ENCODE measurements at regions of chr16 and their contacts with region 1.

Region 1: DNA sequence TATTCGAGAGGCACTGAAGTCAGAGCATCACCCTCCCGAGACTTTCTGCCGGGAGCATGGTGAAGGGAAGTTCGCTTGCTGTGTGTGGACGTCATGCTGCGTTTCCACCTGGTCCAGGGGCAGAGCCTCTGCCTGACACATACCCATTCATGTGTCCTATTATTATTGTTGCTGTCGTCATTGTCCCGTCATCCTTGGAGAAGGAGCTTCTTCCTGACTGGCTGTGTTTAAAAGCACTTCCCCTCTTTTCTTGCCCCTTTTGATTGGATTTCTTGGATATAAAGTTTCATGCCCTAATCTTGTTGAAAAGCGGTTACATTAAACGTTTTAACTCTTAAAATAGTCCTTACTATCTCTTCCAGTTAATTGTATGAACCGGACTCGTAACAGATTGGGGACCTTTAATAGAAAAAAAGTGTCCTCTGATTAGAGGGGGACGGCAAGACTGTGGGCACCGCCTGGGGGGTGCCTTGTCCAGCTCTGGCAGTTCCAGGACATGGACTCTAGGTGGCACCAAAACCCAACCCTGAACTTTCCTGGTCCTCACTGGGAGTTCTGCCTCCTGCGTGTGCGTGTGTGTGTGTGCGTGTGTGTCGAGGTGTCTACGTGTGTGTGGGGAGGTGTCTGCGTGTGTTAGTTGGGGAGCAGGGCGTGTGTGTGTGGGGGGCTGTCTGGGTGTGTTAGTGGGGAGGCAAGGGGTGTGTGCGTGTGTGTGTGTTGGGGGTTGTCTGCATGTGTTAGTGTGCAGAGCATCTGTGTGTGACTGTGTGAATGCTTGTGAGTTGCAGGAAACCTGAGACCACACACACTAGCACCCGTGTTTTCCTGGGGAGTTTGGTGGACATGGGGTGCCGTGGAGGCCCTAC is 133.3 kb upstream of the CIBAR2 start:
- DNase-seq: peak; percentile 53
- H3K4me3 ChIP-seq: no peak overlapping the region
- H3K27ac ChIP-seq: no peak overlapping the region
- H3K4me1 ChIP-seq: no peaks in the 10 kb centered on the region
- H3K27me3 ChIP-seq: no peaks in the 10 kb centered on the region
- CTCF ChIP-seq: peak; percentile 83 to 92
- POLR2A ChIP-seq: no peak

Region 2: DNA sequence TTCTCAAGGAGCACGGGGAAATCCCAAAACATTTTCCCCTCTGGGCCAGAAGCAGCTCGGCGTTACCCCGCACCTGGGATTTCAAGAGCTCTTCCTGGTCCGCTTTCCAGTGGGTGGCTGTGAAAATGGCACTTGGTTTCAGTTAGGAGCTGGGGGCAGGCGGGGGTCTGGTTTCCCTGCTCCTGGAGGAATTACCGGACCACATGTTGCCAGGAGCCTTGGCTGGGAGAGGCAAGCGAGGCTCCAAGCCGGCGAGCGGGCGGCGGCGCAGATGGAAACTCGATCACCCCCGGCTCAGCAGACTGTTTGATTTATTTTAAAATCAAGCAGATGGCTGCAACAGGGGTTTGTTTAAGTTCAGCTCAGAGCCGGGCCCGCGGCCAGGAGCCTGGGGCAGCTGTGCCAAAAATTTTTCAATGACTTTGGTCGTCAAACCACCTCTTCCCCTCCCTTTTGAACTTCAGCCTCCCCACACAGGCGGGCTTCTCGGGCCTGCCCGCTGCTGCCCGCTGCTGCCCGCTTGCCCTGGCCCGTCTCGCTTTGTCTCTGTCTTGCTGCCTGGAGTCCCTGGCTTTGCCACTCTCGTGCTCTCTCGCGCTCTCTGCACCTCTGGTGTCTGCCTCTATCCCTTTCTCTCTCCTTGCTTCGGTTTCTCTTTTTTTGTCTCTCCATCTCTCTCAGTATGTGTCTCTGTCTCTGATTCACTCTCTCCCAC is 25.3 kb before region 1 on chr16:
- CTCF ChIA-PET with region 1: interaction called, 11 read pairs
- POLR2A ChIA-PET with region 1: no interaction called
- dilution Hi-C with region 1: no loop called
- intact Hi-C with region 1: loop called (anchors 1 kb)
- DNase-seq: peak; percentile 79
- H3K4me3 ChIP-seq: peak overlapping the region in 1 of 3 experiments; percentile 18
- H3K27ac ChIP-seq: peak overlapping the region; percentile 24
- H3K4me1 ChIP-seq: peaks cover 10% of the 10 kb centered on the region
- H3K27me3 ChIP-seq: no peaks in the 10 kb centered on the region
- CTCF ChIP-seq: no peak
- POLR2A ChIP-seq: no peak

Region 3: GRCh38 chr16:85234310-85235204 is 11.0 kb before region 1 on chr16:
- CTCF ChIA-PET with region 1: interaction called, 19 read pairs
- POLR2A ChIA-PET with region 1: no interaction called
- dilution Hi-C with region 1: no loop called
- intact Hi-C with region 1: no loop called
- DNase-seq: peak; percentile 69
- H3K4me3 ChIP-seq: peak overlapping the region in 2 of 3 experiments; percentile 49 to 56
- H3K27ac ChIP-seq: peak overlapping the region; percentile 40
- H3K4me1 ChIP-seq: peaks cover 14% of the 10 kb centered on the region
- H3K27me3 ChIP-seq: no peaks in the 10 kb centered on the region
- CTCF ChIP-seq: no peak
- POLR2A ChIP-seq: no peak

Region 4: GRCh38 chr16:85291302-85292148 is 46.0 kb after region 1 on chr16:
- CTCF ChIA-PET with region 1: no interaction called
- POLR2A ChIA-PET with region 1: no interaction called
- dilution Hi-C with region 1: no loop called
- intact Hi-C with region 1: no loop called
- DNase-seq: peak; percentile 33
- H3K4me3 ChIP-seq: no peak overlapping the region
- H3K27ac ChIP-seq: no peak overlapping the region
- H3K4me1 ChIP-seq: peaks cover 6% of the 10 kb centered on the region
- H3K27me3 ChIP-seq: no peaks in the 10 kb centered on the region
- CTCF ChIP-seq: no peak
- POLR2A ChIP-seq: no peak

Region 5: DNA sequence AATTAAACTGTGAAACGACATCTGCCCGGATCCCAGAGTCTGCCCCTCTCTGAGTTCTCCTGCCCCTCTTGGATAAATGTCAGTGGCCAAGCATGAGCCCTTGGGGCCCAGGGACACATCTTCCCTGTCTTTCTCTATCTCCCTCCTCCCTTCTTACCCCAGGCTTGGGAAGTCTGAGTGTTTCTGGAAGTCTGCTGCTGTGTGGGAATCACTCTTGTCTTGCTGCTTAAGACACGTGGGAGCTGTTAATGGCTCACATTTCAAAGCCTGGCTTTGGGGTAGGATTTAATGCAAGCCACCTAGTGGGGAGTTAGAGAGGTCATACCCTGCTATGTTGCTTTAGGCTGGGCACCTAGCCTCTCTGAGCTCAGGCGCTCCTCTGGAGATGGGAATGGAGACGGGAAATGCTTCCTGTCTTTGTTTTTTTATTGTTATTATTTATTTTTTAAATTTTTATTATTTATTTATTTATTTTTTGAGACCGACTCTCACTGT is 85.2 kb after region 1 on chr16:
- CTCF ChIA-PET with region 1: no interaction called
- POLR2A ChIA-PET with region 1: no interaction called
- dilution Hi-C with region 1: no loop called
- intact Hi-C with region 1: no loop called
- DNase-seq: no peak
- H3K4me3 ChIP-seq: no peak overlapping the region
- H3K27ac ChIP-seq: no peak overlapping the region
- H3K4me1 ChIP-seq: peaks cover 30% of the 10 kb centered on the region
- H3K27me3 ChIP-seq: no peaks in the 10 kb centered on the region
- CTCF ChIP-seq: peak; percentile 30 to 40
- POLR2A ChIP-seq: no peak